ENCODE measurements at regions of chr11 and their contacts with region 1.

Region 1: DNA sequence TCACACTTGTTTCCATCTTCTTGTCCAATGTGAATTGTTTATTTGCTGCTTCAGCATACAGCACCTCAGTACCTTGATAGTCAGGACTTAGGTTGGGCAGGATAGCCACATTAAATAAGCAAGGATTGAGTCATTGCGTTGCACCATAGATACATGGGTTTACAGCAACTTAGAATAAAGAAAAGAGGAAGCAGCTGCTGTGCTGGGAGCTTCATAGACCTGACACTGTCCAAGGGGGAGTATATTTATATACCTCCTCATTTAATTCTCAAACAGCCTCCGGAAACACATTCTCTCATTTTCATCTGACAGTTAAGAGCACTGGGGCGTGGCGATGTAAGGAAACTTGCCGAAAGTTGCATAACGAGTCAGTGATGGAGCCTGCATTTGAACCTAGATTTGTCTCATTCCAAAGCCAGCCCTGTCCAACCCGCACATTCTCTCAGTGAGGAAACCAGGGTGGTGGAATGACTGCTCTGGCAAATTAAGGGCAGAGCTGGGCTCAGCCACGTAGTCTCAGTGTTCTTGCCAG is 42.2 kb downstream of the UBASH3B start:
- DNase-seq: peak; percentile 79
- H3K4me3 Mint-ChIP-seq: peak overlapping the region; percentile 63
- H3K27ac Mint-ChIP-seq: peak overlapping the region; percentile 82
- H3K4me1 Mint-ChIP-seq: peaks cover 43% of the 10 kb centered on the region
- H3K27me3 Mint-ChIP-seq: peaks cover 5% of the 10 kb centered on the region

Region 2: DNA sequence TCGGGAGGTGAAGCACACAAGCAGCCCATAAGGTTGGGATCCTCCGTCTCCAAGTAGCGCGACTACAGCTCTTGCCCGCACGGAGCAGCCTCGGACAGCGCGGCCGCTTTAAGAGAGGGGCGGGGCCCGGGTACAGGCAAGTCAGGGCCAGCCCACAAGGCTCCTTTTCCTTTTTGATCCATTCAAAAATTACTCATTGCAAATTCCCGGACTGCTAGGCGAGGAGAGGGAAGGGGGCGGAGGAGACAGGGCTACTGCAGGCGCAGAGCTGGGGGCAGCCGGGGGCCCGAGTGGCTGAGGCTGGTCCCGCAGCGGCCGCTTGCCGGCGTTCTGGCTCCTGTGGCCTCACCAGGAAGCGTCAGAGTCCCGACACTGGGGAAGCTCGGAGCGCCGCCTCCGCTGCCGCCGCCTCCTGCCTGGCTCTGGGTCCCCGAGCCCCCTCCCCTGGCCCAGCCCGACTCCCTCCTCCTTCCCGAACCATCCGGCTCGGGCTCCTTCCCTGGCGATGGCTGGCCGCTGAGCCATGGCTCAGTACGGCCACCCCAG is 42.1 kb before region 1 on chr11 and contains the start of gene UBASH3B:
- intact Hi-C with region 1: loop called (anchors 1 kb)
- DNase-seq: peak; percentile 89
- H3K4me3 Mint-ChIP-seq: peak within 1 kb of the TSS; percentile 97
- H3K27ac Mint-ChIP-seq: peak within 1 kb of the TSS; percentile 86
- H3K4me1 Mint-ChIP-seq: peaks cover 17% of the 10 kb centered on the region
- H3K27me3 Mint-ChIP-seq: peaks cover 50% of the 10 kb centered on the region
- total RNA-seq, gene UBASH3B: 10.9 and 14.8 TPM in 2 replicates

Region 3: GRCh38 chr11:122671400-122671891 is 26.3 kb before region 1 on chr11:
- intact Hi-C with region 1: loop called (anchors 2 kb)
- DNase-seq: no peak
- H3K4me3 Mint-ChIP-seq: no peak overlapping the region
- H3K27ac Mint-ChIP-seq: no peak overlapping the region
- H3K4me1 Mint-ChIP-seq: peaks cover 34% of the 10 kb centered on the region
- H3K27me3 Mint-ChIP-seq: peaks cover 3% of the 10 kb centered on the region

Region 4: DNA sequence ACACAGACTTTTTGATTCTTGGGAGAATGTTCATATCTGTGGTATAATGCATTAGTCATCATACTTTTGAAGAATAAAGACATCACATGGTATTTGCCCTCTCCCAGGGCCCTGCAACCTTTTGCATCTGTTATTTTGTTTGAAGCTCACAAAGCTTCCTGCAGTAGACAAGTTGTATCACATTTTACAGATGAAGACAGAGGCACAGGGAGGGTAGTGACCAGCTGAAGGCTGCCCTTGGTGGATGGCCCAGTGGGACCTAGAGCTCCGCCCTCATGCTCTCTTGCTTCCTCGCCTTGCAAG is 24.2 kb after region 1 on chr11:
- intact Hi-C with region 1: loop called (anchors 1 kb)
- DNase-seq: peak; percentile 61
- H3K4me3 Mint-ChIP-seq: no peak overlapping the region
- H3K27ac Mint-ChIP-seq: peak overlapping the region; percentile 45
- H3K4me1 Mint-ChIP-seq: peaks cover 51% of the 10 kb centered on the region
- H3K27me3 Mint-ChIP-seq: peaks cover 14% of the 10 kb centered on the region

Measured in activated CD4-positive, alpha-beta T cell treated with anti-CD3 and anti-CD28 coated beads, Interleukin-2, amount 10 ng/mL, durations not matched to agents 24 days and 14 days (primary cell).